Activated CD4-positive, alpha-beta T cell treated with anti-CD3 and anti-CD28 coated beads for 36 hours (primary cell): ENCODE measurements at regions of chr16 and their contacts with region 1.

Region 1: DNA sequence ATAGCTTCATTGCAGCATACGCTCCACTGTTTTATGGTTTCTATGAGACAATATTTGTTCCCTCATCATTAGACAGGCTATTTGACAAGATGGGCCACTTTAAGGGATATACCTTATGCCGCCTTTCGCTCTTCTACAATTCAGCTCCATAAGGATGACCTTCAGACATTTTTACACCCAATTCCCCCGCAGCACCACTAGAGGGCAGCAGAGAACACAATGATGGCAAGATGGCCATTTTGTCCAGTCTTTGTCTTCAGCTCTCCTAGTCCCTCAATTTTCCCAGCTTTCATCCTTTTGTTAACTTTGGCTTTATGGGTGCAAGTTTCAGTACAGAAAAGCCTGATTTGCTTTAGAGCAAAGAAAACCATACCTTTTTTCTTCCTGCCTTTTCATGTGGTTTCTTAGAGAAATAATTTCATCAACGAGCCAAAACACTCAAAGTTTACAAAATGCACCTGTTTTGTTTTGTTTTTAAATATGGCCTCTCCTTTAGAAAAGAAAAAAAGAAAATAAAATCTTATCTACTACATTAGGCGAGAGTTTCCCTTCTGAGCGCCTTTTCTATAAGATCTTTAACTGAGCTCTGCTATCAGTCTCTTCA is 355.3 kb downstream of the TOX3 start:
- DNase-seq: peak; percentile 69
- ATAC-seq: no peak
- H3K4me3 Mint-ChIP-seq: no peak overlapping the region
- H3K27ac Mint-ChIP-seq: no peak overlapping the region
- H3K4me1 Mint-ChIP-seq: no peaks in the 10 kb centered on the region
- H3K27me3 Mint-ChIP-seq: no peaks in the 10 kb centered on the region

Region 2: GRCh38 chr16:51072591-51072990 is 1119.0 kb before region 1 on chr16:
- CTCF ChIA-PET with region 1: no interaction called
- POLR2A ChIA-PET with region 1: no interaction called
- intact Hi-C with region 1: no loop called
- DNase-seq: no peak
- ATAC-seq: no peak
- H3K4me3 Mint-ChIP-seq: no peak overlapping the region
- H3K27ac Mint-ChIP-seq: no peak overlapping the region
- H3K4me1 Mint-ChIP-seq: no peaks in the 10 kb centered on the region
- H3K27me3 Mint-ChIP-seq: peaks cover 2% of the 10 kb centered on the region

Region 3: GRCh38 chr16:52557236-52557635 is 365.6 kb after region 1 on chr16:
- CTCF ChIA-PET with region 1: no interaction called
- POLR2A ChIA-PET with region 1: no interaction called
- intact Hi-C with region 1: loop called in 1 of 2 experiments (anchors 5 kb)
- DNase-seq: no peak
- ATAC-seq: no peak
- H3K4me3 Mint-ChIP-seq: no peak overlapping the region
- H3K27ac Mint-ChIP-seq: no peak overlapping the region
- H3K4me1 Mint-ChIP-seq: no peaks in the 10 kb centered on the region
- H3K27me3 Mint-ChIP-seq: peaks cover 9% of the 10 kb centered on the region

Region 4: DNA sequence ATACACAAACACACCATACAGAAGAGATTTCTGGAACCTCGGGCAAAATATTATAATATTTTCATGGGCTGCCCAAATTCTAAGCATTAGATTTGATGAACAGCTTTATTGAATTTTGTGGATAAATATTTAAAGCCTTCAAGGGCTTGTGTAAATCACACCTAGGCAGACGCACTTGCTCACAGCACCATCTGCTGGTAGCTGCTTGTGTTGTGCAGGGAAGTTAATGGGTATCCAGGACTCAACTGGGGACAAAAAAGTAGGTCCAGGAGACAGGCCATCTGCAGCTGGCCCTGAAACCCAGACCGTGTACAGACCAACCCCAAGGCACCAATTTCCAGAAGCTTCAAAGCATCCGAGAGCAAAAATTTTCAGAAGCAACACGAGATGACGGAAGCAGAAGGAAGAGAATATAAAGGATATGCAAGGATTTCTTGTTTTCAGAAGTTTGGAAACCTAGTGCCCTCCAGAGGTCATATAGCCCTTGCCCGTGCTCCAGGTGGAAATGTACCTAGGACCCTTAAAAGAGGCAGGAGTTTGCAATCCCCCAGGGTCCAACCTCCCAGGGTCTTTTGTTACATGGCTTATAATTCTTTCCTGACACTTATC is 721.0 kb after region 1 on chr16:
- CTCF ChIA-PET with region 1: interaction called, 29 read pairs
- POLR2A ChIA-PET with region 1: no interaction called
- intact Hi-C with region 1: loop called (anchors 1 kb)
- DNase-seq: peak; percentile 67
- ATAC-seq: no peak
- H3K4me3 Mint-ChIP-seq: no peak overlapping the region
- H3K27ac Mint-ChIP-seq: no peak overlapping the region
- H3K4me1 Mint-ChIP-seq: no peaks in the 10 kb centered on the region
- H3K27me3 Mint-ChIP-seq: peaks cover 8% of the 10 kb centered on the region

Region 5: GRCh38 chr16:53022374-53022773 is 830.7 kb after region 1 on chr16:
- CTCF ChIA-PET with region 1: interaction called, 4 read pairs
- POLR2A ChIA-PET with region 1: no interaction called
- intact Hi-C with region 1: loop called (anchors 1 to 2 kb)
- DNase-seq: peak; percentile 35
- ATAC-seq: no peak
- H3K4me3 Mint-ChIP-seq: no peak overlapping the region
- H3K27ac Mint-ChIP-seq: no peak overlapping the region
- H3K4me1 Mint-ChIP-seq: no peaks in the 10 kb centered on the region
- H3K27me3 Mint-ChIP-seq: peaks cover 3% of the 10 kb centered on the region

Region 6: DNA sequence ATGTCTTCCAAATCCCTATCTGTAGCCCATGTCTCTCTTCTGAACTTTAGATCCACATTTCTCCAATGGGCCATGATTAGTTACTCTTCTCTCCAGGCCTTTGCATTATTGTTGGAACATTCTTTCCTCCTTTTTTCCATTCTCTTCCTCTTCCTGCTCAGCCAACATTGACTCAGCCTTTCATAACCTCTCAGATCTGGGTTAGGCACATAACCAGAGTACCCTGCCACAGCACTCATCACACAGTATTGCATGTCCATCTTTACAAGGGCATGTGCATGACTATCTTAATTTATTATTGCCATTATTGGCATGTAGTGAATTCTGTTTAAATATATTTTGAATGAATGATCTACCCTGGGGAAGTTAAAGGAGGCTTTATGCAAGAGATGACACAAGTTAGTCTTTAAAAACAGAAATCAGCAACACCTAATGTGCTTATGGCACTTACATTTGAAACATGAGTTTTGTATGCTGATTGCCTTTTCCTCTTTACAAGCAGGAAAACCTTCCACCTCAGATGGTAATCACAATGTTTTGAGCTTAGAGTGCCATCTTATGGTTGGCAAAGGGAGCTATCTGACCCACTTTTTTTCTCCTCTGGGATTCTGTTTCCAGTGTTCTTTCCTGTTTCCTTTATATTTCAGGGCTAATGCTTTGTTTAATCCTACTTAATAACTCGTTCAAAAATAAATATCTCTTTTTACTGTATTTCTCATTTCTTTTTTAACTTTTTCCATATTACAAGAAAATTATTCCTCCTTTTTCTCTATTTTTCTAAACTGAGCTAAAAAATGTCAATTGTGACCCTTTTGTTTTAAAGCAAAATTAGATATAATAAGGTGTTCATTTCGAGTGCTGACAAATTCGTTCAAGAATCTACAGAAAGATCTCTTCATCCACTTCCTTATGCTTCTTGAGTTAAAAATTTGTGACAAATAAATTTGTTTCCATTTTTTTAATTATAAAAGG is 1091.6 kb after region 1 on chr16:
- CTCF ChIA-PET with region 1: no interaction called
- POLR2A ChIA-PET with region 1: no interaction called
- intact Hi-C with region 1: loop called in 1 of 2 experiments (anchors 5 kb)
- DNase-seq: no peak
- ATAC-seq: no peak
- H3K4me3 Mint-ChIP-seq: no peak overlapping the region
- H3K27ac Mint-ChIP-seq: no peak overlapping the region
- H3K4me1 Mint-ChIP-seq: no peaks in the 10 kb centered on the region
- H3K27me3 Mint-ChIP-seq: no peaks in the 10 kb centered on the region